ENCODE measurements at regions of chr1 and their contacts with region 1.

Region 1: DNA sequence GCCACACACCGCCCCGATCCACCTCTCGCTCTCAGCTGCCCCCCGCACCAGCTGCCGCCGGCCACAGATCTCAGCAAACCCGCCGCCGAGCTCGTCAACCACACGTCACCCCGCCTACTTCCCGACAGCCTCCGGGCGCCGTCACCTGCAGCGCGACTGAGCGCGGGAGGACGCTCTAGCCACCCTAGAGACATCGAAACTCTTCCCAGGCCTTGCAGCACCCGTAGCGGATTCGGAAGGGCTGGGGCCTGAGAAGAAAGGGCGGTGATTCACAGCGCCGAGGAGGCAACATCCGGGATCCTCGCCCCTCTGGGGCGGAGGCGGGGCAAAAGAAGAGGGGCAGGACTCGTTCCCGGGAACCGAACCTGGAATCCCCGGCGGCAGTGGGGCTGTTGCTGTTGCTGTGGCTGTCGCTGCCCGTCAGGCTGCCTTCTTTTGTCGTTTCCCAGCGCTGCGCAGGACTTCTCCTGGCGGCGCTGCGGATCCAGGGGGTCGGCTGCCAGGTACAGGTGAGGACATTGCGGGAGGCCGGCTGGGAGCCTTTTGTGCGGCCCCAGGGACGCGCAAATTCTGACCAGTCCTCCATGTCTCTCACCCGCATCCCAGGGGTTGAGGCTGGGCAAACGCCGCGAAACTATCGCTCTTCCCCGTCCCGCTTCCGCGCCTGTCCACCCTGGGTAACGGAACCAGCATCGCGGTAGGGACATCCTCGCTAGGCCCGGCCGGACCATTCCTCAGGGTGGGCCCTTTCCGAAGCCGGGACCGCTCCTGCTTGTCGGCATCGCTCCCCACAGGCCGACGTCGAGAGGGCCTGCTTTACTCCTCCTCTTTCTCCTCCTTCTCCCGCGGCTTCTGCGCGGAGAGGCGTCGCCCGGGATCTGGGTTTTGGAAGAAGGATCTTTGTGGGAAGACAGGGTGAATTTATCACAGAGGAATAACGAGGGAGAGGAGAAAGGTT is at the starts of genes RO60 and UCHL5:
- DNase-seq: peak; percentile 91 to 97 (median 94)
- H3K4me3 ChIP-seq: peak within 1 kb of the TSS; percentile 93
- H3K4me3 Mint-ChIP-seq: peak within 1 kb of the TSS; percentile 94 to 100 (median 94)
- H3K27ac ChIP-seq: peak within 1 kb of the TSS; percentile 97
- H3K27ac Mint-ChIP-seq: peak within 1 kb of the TSS; percentile 89 to 100 (median 98)
- H3K4me1 ChIP-seq: peaks cover 47% of the 10 kb centered on the region
- H3K4me1 Mint-ChIP-seq: peaks cover 61 to 76% (median 70%) of the 10 kb centered on the region in 3 donors
- H3K27me3 ChIP-seq: no peaks in the 10 kb centered on the region
- H3K27me3 Mint-ChIP-seq: no peaks in the 10 kb centered on the region
- total RNA-seq, gene RO60: 74.6 to 82.7 TPM
- total RNA-seq, gene UCHL5: 106 to 110 TPM

Region 2: DNA sequence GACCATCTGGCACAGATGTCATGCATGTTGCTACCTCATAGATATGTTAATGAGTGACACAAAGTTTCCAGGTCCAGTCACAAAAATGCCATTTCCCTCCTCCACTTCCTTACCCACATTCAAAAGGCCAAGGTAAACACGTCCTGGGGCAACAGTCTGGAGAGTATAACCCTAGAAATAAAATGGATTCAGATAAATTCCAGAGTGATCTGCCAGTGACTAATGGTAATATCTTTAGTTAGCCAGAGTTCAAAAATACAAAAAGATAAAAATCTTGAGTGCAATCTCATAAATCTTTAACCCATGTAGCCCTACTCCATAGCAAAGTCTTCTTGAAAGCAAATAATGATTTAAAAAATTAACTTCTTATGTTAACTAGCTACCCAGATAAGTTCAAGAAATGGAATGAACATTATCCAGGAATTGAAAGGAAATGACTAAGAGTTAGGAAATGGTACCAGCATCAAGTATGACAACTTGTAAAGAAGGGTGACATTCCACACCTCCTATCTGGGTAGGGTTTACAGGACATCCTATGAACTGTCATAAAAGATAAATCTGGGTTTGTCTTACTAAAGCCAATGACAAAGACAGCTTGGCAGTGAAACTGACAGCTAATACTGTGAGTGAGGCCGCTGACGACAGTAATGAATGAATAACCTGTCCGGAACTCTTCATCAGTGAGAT is 232.6 kb before region 1 on chr1:
- CTCF ChIA-PET with region 1: no interaction called
- POLR2A ChIA-PET with region 1: no interaction called
- DNase-seq: no peak
- H3K4me3 ChIP-seq: no peak overlapping the region
- H3K4me3 Mint-ChIP-seq: no peak overlapping the region
- H3K27ac ChIP-seq: no peak overlapping the region
- H3K27ac Mint-ChIP-seq: no peak overlapping the region
- H3K4me1 ChIP-seq: no peaks in the 10 kb centered on the region
- H3K4me1 Mint-ChIP-seq: no peaks in the 10 kb centered on the region
- H3K27me3 ChIP-seq: no peaks in the 10 kb centered on the region
- H3K27me3 Mint-ChIP-seq: peaks cover 10 to 37% of the 10 kb centered on the region in 2 donors

Region 3: GRCh38 chr1:193009501-193009900 is 50.0 kb before region 1 on chr1:
- CTCF ChIA-PET with region 1: no interaction called
- POLR2A ChIA-PET with region 1: no interaction called
- DNase-seq: no peak
- H3K4me3 ChIP-seq: no peak overlapping the region
- H3K4me3 Mint-ChIP-seq: no peak overlapping the region
- H3K27ac ChIP-seq: no peak overlapping the region
- H3K27ac Mint-ChIP-seq: peak overlapping the region in 1 of 8 donors; percentile 17
- H3K4me1 ChIP-seq: no peaks in the 10 kb centered on the region
- H3K4me1 Mint-ChIP-seq: peaks cover 0 to 6% (median 3%) of the 10 kb centered on the region in 3 donors
- H3K27me3 ChIP-seq: no peaks in the 10 kb centered on the region
- H3K27me3 Mint-ChIP-seq: no peaks in the 10 kb centered on the region

Region 4: DNA sequence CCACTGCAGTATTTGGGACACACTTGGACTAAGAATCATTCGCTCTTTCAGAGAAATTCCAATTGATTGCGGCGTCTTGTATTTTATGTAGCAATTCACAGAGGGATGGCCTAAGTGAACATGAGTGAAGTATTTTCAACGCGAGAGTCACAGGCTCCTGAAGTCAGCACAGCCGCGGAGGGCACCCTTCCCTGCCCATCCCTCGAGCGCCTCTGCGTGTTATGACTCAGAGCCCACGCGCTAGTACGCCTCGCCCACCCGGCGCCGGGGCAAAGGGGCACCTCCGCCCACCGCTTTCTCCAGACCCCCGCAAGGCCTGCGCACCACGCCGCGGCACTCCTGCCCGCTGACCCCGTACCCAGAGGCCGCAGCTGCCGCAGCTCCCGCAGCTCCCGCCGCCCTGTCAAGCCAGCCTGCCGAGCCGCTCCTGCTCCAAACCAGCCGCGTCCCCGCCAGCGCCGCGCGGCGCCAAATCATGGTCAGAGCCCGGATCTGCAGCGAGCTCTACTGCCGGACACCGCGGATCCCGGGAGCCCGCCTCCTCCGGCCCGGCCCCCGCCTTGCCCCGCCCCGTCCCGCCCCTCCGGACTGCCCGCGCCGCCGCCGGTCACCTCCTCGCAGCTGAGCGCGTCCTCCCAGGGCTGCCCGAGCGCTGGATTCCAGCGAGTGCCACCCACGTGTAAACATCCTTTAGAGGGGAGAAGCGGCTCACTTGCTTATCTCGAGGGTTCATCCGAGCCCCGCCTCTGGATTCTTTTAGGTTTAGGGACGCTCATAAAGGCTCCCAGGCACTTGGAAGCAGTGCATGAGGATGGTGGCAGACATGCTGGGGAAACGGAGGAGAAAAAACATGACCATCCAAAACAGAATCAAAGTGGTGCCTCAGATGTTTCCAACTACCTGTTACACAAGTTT is 45.6 kb after region 1 on chr1 and contains the start of gene GLRX2:
- CTCF ChIA-PET with region 1: interaction called, 5 read pairs
- POLR2A ChIA-PET with region 1: interaction called, 11 read pairs
- DNase-seq: peak; percentile 49 to 78 (median 51)
- H3K4me3 ChIP-seq: peak within 1 kb of the TSS; percentile 79
- H3K4me3 Mint-ChIP-seq: peak within 1 kb of the TSS; percentile 93 to 97 (median 96)
- H3K27ac ChIP-seq: peak within 1 kb of the TSS; percentile 49
- H3K27ac Mint-ChIP-seq: peak within 1 kb of the TSS; percentile 74 to 96 (median 90)
- H3K4me1 ChIP-seq: peaks cover 11% of the 10 kb centered on the region
- H3K4me1 Mint-ChIP-seq: peaks cover 18 to 34% (median 33%) of the 10 kb centered on the region in 3 donors
- H3K27me3 ChIP-seq: no peaks in the 10 kb centered on the region
- H3K27me3 Mint-ChIP-seq: no peaks in the 10 kb centered on the region
- total RNA-seq, gene GLRX2: 47.1 to 49.6 TPM

Region 5: GRCh38 chr1:193121616-193122593 is 62.4 kb after region 1 on chr1 and contains the start of gene CDC73:
- CTCF ChIA-PET with region 1: interaction called, 30 read pairs
- POLR2A ChIA-PET with region 1: interaction called, 12 read pairs
- DNase-seq: peak; percentile 99 to 100 (median 99)
- H3K4me3 ChIP-seq: peak within 1 kb of the TSS; percentile 99
- H3K4me3 Mint-ChIP-seq: peak within 1 kb of the TSS; percentile 93 to 99 (median 95)
- H3K27ac ChIP-seq: peak within 1 kb of the TSS; percentile 97
- H3K27ac Mint-ChIP-seq: peak within 1 kb of the TSS; percentile 90 to 99 (median 97)
- H3K4me1 ChIP-seq: peaks cover 40% of the 10 kb centered on the region
- H3K4me1 Mint-ChIP-seq: peaks cover 52 to 64% (median 63%) of the 10 kb centered on the region in 3 donors
- H3K27me3 ChIP-seq: no peaks in the 10 kb centered on the region
- H3K27me3 Mint-ChIP-seq: peaks cover 0 to 1% of the 10 kb centered on the region in 2 donors
- total RNA-seq, gene CDC73: 59.8 to 63.8 TPM